PC-9 (cell line): ENCODE measurements at regions of chr1 and their contacts with region 1.

Region 1: GRCh38 chr1:164261691-164262255 is 297.2 kb upstream of the PBX1 start:
- DNase-seq: peak in 1 of 2 experiments; percentile 62
- H3K4me3 ChIP-seq: no peak overlapping the region
- H3K27ac ChIP-seq: no peak overlapping the region
- H3K4me1 ChIP-seq: peaks cover 21% of the 10 kb centered on the region
- H3K27me3 ChIP-seq: no peaks in the 10 kb centered on the region
- CTCF ChIP-seq: no peak

Region 2: DNA sequence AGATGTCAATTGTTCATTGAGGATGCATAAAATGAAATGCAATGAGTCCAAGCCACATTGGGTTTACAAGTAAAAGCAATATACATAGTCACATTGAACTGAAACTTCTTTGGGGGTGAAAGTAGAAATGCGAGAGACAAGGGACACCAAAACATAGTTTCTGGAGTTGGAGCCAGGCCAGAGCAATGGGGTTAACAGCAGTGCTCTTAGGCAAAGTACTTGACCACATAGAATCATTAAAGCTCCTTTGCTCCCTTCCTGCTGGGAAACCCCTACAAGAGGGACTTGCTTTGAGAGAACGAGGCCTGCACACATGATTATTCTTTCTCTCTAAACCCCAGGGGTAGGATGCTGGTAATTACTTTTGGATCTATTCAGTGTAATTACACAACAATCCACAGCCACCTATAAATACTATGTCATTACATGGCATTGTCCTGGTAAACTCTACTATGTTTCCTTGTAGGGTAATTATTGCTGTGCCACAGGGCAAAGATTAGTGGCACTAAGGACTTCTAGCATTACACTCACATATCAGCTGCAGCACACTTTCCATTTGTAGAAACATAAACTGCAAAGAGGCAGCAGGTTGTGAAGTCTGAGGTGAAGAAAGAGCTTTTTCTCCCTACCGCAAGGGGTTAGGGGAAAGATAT is 124.4 kb before region 1 on chr1:
- CTCF ChIA-PET with region 1: no interaction called
- POLR2A ChIA-PET with region 1: no interaction called
- intact Hi-C with region 1: no loop called
- DNase-seq: no peak
- H3K4me3 ChIP-seq: no peak overlapping the region
- H3K27ac ChIP-seq: no peak overlapping the region
- H3K4me1 ChIP-seq: no peaks in the 10 kb centered on the region
- H3K27me3 ChIP-seq: no peaks in the 10 kb centered on the region
- CTCF ChIP-seq: no peak

Region 3: DNA sequence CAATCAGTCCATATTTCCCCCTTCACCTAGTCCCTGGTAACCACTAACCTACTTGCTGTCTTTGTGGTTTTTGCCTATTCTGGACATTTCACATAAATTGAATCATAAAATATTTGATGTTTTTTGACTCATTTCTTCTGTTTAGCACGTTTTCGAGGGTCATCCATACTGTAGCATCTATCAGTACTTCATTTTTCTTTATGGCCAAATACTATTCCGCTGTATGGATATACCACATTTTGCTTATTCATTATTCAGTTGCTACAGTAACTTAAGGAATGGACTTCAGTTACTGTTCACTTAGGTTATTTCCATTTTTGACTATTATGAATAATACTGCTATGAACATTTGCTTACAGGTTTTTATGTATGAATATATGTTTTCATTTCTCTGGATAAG is 309.6 kb after region 1 on chr1:
- CTCF ChIA-PET with region 1: no interaction called
- POLR2A ChIA-PET with region 1: interaction called, 17 read pairs
- intact Hi-C with region 1: no loop called
- DNase-seq: no peak
- H3K4me3 ChIP-seq: no peak overlapping the region
- H3K27ac ChIP-seq: no peak overlapping the region
- H3K4me1 ChIP-seq: no peaks in the 10 kb centered on the region
- H3K27me3 ChIP-seq: no peaks in the 10 kb centered on the region
- CTCF ChIP-seq: no peak